ENCODE measurements at regions of chr5 and their contacts with region 1.

Region 1: GRCh38 chr5:38655691-38656090 is 99.2 kb upstream of the LIFR start:
- DNase-seq: no peak
- H3K4me3 ChIP-seq: no peak overlapping the region
- H3K27me3 ChIP-seq: peaks cover 3% of the 10 kb centered on the region
- CTCF ChIP-seq: no peak

Region 2: GRCh38 chr5:38598994-38599611 is 56.6 kb before region 1 on chr5:
- CTCF ChIA-PET with region 1: no interaction called
- POLR2A ChIA-PET with region 1: interaction called, 19 read pairs
- DNase-seq: peak; percentile 40
- H3K4me3 ChIP-seq: no peak overlapping the region
- H3K27me3 ChIP-seq: no peaks in the 10 kb centered on the region
- CTCF ChIP-seq: no peak

Measured in BJ (cell line).